Tibial artery (tissue), 4 donors: ENCODE measurements at regions of chr1 and their contacts with region 1.

Region 1: DNA sequence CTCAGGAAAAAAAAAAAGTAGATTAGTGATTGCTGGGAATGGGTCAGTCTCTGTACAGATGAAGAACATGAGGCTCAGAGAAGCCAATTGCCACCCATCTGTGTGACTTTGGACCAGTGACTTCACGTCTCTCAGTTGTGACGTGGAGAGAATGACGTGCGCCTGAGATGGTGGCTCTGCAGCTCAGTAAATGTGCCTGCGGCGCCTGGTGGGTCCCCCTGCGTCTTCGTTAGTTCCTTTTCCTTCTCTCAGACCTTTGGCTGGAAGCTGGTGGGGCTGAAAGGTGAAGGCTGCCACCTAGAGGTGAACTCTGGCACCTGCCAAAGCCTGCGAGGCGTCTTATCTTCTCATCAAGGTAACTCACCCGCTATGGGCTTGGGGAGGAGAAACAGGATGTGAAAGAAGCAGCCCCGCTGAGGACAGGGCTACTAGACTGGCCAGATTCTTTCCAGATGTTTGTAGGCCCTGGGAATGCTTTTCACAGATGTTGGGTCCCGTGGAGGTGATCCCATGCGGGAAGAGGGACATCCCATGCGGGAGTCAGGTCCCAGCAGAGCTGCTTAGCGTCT is 8.7 kb upstream of the E2F2 start:
- DNase-seq: peak; percentile 76 to 90
- H3K4me3 ChIP-seq: peak overlapping the region in 1 of 2 donors; percentile 24
- H3K27ac ChIP-seq: no peak overlapping the region
- H3K4me1 ChIP-seq: peaks cover 0 to 12% (median 9%) of the 10 kb centered on the region in 4 donors
- H3K27me3 ChIP-seq: no peaks in the 10 kb centered on the region
- CTCF ChIP-seq: peak; percentile 92 to 93

Region 2: GRCh38 chr1:23367791-23368561 is 171.8 kb before region 1 on chr1:
- intact Hi-C with region 1: loop called (anchors 10 kb)
- DNase-seq: peak; percentile 98 to 99
- H3K4me3 ChIP-seq: peak overlapping the region; percentile 71 to 95
- H3K27ac ChIP-seq: peak overlapping the region; percentile 98 to 99
- H3K4me1 ChIP-seq: peaks cover 0 to 47% (median 39%) of the 10 kb centered on the region in 4 donors
- H3K27me3 ChIP-seq: no peaks in the 10 kb centered on the region
- CTCF ChIP-seq: no peak

Region 3: GRCh38 chr1:23496490-23497181 is 43.1 kb before region 1 on chr1:
- intact Hi-C with region 1: loop called (anchors 5 kb)
- DNase-seq: no peak
- H3K4me3 ChIP-seq: no peak overlapping the region
- H3K27ac ChIP-seq: no peak overlapping the region
- H3K4me1 ChIP-seq: no peaks in the 10 kb centered on the region
- H3K27me3 ChIP-seq: no peaks in the 10 kb centered on the region
- CTCF ChIP-seq: no peak

Region 4: DNA sequence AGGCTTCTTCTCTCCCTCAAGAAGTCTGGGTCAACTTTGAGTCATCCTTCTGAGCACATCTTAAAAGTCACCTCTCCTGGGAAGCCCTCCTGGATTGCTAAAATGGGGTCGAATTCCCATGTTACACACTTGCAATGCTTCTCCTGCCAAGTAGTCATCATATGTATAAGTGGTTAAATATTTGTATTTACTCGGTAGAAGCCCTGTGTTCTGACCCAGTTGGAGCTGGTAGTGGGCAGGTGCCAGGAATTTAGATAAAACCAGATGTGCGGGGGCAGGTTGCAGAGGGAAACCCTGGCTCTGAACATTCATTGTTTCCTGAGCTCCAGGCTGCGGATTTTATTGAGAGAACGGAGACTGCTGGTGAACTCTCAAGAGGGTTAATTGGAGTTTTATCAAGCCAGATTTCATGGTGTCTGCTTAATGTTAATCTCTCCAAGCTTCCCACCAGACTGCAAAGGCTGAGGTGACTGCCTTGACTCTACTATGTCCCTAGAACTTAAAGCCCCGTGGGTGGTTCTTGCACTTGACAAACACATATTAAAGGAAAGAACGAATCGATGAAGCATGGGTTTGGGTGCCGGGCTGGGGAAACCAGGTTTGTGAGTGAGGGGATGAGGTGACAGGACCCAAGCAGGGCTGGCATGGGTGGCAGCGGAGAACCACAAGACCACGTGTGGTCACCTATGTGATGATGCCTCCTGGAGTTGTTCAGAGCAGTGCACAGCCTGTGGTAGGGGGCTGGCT is 99.2 kb after region 1 on chr1:
- intact Hi-C with region 1: loop called (anchors 2 kb)
- DNase-seq: no peak
- H3K4me3 ChIP-seq: no peak overlapping the region
- H3K27ac ChIP-seq: no peak overlapping the region
- H3K4me1 ChIP-seq: peaks cover 0 to 23% (median 3%) of the 10 kb centered on the region in 4 donors
- H3K27me3 ChIP-seq: no peaks in the 10 kb centered on the region
- CTCF ChIP-seq: no peak